ENCODE measurements at regions of chr12 and their contacts with region 1.

Region 1: DNA sequence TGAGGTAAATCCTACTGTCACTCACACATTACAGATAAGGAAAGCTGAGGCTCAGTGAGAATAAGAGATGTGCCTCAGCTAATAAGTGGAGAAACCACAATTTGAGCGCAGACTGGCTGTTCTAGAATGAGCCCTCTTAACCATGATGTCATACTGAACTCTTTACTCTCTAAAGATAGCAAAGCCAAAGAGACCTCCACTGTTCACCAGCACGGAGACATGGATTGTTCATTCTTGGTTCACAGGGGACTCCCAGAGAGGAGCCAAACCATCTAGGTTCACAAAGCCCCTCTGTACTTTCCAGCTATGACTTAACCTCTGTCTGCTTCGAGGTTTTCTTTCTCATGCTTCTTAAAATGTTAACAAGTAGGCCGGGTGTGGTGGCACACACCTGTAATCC is 32.7 kb upstream of the YARS2 start:
- DNase-seq: no peak
- H3K4me3 ChIP-seq: no peak overlapping the region
- H3K27ac ChIP-seq: no peak overlapping the region
- H3K4me1 ChIP-seq: no peaks in the 10 kb centered on the region
- H3K27me3 ChIP-seq: no peaks in the 10 kb centered on the region
- CTCF ChIP-seq: no peak
- POLR2A ChIP-seq: no peak

Region 2: DNA sequence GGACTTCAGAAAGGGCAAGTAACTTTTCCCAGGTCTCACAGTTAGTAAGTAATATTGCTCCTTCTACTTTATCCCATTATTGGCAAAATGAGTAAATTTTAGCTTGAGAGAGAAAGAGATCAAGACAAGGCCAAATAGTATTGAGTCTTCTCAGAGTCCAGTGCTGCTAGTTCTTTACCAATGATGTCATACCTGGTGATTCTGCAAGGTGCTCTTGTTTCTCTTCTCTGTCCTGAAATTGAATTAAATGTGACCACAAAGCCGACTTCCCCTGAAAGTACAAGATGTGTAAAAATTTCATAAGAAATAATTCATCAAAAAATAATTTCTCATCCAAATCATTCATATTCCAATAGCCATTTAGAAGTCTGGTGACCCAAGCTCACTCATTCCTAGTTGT is 1365.0 kb before region 1 on chr12:
- intact Hi-C with region 1: no loop called
- DNase-seq: no peak
- H3K4me3 ChIP-seq: no peak overlapping the region
- H3K27ac ChIP-seq: no peak overlapping the region
- H3K4me1 ChIP-seq: no peaks in the 10 kb centered on the region
- H3K27me3 ChIP-seq: no peaks in the 10 kb centered on the region
- CTCF ChIP-seq: no peak
- POLR2A ChIP-seq: no peak

Region 3: DNA sequence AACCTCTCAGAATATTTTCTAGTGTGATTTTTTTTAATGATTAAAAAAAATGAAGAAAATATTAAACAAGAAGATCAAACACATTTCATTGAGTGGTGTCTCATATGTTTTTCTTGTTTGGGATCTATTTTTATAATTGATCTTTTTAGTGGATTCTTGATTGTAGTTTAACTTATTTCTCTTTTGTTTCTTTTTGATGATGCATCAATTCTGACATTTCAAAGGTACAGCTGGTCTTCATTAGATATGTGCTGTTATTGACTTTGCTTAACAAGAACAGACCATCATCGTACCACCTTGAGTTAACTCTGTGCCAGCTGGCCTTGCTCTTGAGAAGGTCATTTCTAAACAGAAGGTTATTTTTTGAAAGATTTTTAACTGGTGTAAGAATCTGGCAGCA is 434.9 kb before region 1 on chr12:
- intact Hi-C with region 1: no loop called
- DNase-seq: no peak
- H3K4me3 ChIP-seq: no peak overlapping the region
- H3K27ac ChIP-seq: no peak overlapping the region
- H3K4me1 ChIP-seq: no peaks in the 10 kb centered on the region
- H3K27me3 ChIP-seq: no peaks in the 10 kb centered on the region
- CTCF ChIP-seq: no peak
- POLR2A ChIP-seq: no peak

Region 4: GRCh38 chr12:34384693-34385092 is 1596.3 kb after region 1 on chr12:
- intact Hi-C with region 1: loop called (anchors 5 kb)
- DNase-seq: no peak
- H3K4me3 ChIP-seq: no peak overlapping the region
- H3K27ac ChIP-seq: no peak overlapping the region
- H3K4me1 ChIP-seq: no peaks in the 10 kb centered on the region
- H3K27me3 ChIP-seq: no peaks in the 10 kb centered on the region
- CTCF ChIP-seq: no peak
- POLR2A ChIP-seq: no peak

Measured in breast epithelium (tissue), 4 donors.